ENCODE measurements at regions of chr1 and their contacts with region 1.

Region 1: GRCh38 chr1:212062832-212063438 is 27.4 kb downstream of the DTL start:
- H3K4me3 ChIP-seq: no peak overlapping the region
- H3K27ac ChIP-seq: no peak overlapping the region
- H3K4me1 ChIP-seq: no peaks in the 10 kb centered on the region
- CTCF ChIP-seq: peak; percentile 21; the same call in 1 of the 2 replicates

Region 2: GRCh38 chr1:211680752-211681327 is 382.1 kb before region 1 on chr1:
- CTCF ChIA-PET with region 1: interaction called, 10 read pairs
- POLR2A ChIA-PET with region 1: no interaction called
- H3K4me3 ChIP-seq: no peak overlapping the region
- H3K27ac ChIP-seq: no peak overlapping the region
- H3K4me1 ChIP-seq: no peaks in the 10 kb centered on the region
- CTCF ChIP-seq: peak; percentile 78

Region 3: GRCh38 chr1:212012034-212012740 is 50.7 kb before region 1 on chr1:
- CTCF ChIA-PET with region 1: interaction called, 14 read pairs
- POLR2A ChIA-PET with region 1: no interaction called
- H3K4me3 ChIP-seq: no peak overlapping the region
- H3K27ac ChIP-seq: no peak overlapping the region
- H3K4me1 ChIP-seq: no peaks in the 10 kb centered on the region
- CTCF ChIP-seq: peak; percentile 59

Region 4: DNA sequence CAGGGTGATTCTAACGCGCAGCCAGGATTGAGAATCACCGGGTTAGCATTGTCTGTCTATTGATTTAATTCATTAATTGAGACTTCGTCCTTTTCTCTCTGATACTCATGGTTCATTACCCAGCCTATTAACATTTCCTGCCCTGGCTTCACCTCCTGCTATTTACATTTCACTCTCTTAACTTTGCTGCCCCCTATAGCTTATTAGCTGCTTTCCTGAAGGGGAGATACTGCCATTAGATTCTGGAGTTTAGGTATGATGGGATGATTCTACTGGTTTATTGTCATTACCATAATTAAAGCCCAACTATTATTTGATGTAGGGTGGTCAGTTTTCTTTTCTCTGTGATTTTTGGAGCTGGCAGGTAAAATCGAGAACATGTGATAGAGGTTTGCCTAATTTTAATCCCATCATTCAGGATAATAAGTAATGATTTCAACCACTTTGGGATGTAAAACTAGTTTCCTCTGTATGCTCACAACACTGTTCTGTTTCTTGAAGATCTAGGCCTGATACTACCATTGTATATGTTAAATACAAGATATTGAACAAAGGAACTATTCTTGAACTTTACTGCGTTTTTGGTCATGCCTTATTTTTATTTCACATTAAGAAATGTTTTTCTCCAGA is 228.7 kb after region 1 on chr1:
- CTCF ChIA-PET with region 1: interaction called, 15 read pairs
- POLR2A ChIA-PET with region 1: no interaction called
- H3K4me3 ChIP-seq: no peak overlapping the region
- H3K27ac ChIP-seq: no peak overlapping the region
- H3K4me1 ChIP-seq: peaks cover 15% of the 10 kb centered on the region; the same call in 1 of the 2 replicates
- CTCF ChIP-seq: peak; percentile 58

Region 5: GRCh38 chr1:212368073-212368484 is 305.1 kb after region 1 on chr1:
- CTCF ChIA-PET with region 1: interaction called, 10 read pairs
- POLR2A ChIA-PET with region 1: interaction called, 7 read pairs
- H3K4me3 ChIP-seq: no peak overlapping the region
- H3K27ac ChIP-seq: no peak overlapping the region
- H3K4me1 ChIP-seq: no peaks in the 10 kb centered on the region
- CTCF ChIP-seq: no peak

Measured in HEK293 (cell line).